ENCODE measurements at regions of chr10 and their contacts with region 1.

Region 1: DNA sequence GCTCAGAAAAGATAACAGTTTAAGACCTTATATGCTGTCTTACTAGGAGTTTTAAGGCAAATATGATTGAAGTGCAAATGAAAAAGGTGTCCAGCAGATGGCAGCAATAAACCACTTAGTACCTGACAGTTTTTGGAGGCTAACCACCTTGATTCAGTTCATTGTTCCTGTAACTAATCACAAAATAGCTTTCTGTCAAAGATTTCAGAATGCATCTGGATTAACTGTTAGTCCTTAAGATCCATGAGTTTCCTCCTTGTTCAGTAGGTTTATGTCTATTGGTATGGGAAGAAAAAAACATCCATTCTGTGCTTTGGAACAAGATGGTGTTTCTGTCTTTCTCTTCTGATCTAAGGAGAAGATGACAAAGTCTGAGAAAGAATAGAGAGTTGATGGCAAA is 46.6 kb downstream of the CCSER2 start:
- DNase-seq: peak; percentile 34
- H3K4me3 ChIP-seq: no peak overlapping the region
- H3K27ac ChIP-seq: no peak overlapping the region
- H3K27me3 ChIP-seq: no peaks in the 10 kb centered on the region
- CTCF ChIP-seq: peak; percentile 72

Region 2: GRCh38 chr10:84360637-84361365 is 14.2 kb before region 1 on chr10:
- CTCF ChIA-PET with region 1: interaction called, 23 read pairs
- POLR2A ChIA-PET with region 1: no interaction called
- DNase-seq: no peak
- H3K4me3 ChIP-seq: peak overlapping the region; percentile 53
- H3K27ac ChIP-seq: no peak overlapping the region
- H3K27me3 ChIP-seq: no peaks in the 10 kb centered on the region
- CTCF ChIP-seq: no peak

Region 3: DNA sequence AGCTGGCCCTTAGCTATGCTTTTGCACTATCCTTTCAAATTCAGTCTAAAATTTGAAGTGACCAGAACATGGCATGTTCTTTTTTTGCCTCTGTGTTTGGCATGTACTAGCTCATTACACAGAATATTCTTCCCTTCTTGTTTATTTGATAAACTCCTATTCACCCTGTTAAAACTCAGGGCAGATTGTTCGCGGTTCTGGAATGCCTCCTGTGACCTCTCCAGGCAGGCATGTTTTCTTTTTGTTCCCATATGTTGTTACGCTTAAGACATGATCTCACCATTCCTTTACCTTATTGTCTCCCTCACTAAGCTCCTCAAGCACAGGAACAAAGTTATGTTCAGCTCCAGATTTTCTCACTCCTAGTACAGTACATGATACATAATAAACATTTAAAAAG is 135.1 kb after region 1 on chr10:
- CTCF ChIA-PET with region 1: interaction called, 12 read pairs
- POLR2A ChIA-PET with region 1: no interaction called
- DNase-seq: peak; percentile 46
- H3K4me3 ChIP-seq: no peak overlapping the region
- H3K27ac ChIP-seq: peak overlapping the region; percentile 32
- H3K27me3 ChIP-seq: no peaks in the 10 kb centered on the region
- CTCF ChIP-seq: no peak

Region 4: GRCh38 chr10:84531396-84531795 is 156.4 kb after region 1 on chr10:
- CTCF ChIA-PET with region 1: interaction called, 234 read pairs
- POLR2A ChIA-PET with region 1: no interaction called
- DNase-seq: no peak
- H3K4me3 ChIP-seq: no peak overlapping the region
- H3K27ac ChIP-seq: no peak overlapping the region
- H3K27me3 ChIP-seq: no peaks in the 10 kb centered on the region
- CTCF ChIP-seq: no peak